K562 (cell line): ENCODE measurements at regions of chr19 and their contacts with region 1.

Region 1: DNA sequence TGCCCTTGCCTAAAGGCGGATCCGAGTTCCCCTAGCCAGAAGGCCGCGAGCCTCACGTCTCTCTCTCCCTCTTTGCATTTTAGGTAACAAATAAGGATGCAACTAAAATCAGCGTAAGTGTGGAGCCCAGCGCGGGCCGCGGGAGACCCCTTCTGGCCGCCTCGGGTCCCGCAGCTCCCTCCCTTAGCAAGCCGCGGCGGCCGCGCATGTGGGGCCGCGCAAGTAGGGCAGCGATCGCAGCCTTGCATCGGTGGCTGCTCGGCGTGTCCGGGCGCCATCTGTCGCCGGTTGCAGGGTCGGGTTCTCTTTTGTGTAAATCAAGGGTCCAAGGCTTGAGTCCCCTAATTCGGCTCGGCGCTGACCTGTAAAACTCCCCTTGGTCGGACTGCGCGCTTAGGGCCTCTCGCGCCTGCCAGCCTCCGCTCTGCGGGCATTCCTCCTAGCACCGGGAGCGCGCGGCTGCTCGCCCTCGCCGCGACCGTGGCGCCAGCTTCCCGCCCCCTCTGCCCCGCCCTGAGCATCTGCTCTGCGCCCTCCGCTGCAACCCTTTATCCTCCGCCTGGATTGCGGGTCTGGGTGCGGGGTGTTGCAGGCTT is 2.7 kb downstream of the VSTM2B start:
- DNase-seq: peak; percentile 60 to 78 (median 77)
- ATAC-seq: peak; percentile 95
- H3K4me3 ChIP-seq: no peak overlapping the region
- H3K27ac ChIP-seq: no peak overlapping the region
- H3K4me1 ChIP-seq: peaks cover 0 to 43% of the 10 kb centered on the region in 2 experiments; a peak in 2 of 5 replicates
- H3K27me3 ChIP-seq: peaks cover 0 to 31% of the 10 kb centered on the region in 2 experiments; a peak in 2 of 5 replicates
- CTCF ChIP-seq: peak; percentile 74 to 88 (median 76)
- EP300 ChIP-seq: no peak
- POLR2A ChIP-seq: no peak
- RAD21 ChIP-seq: peak; percentile 24 to 75

Region 2: DNA sequence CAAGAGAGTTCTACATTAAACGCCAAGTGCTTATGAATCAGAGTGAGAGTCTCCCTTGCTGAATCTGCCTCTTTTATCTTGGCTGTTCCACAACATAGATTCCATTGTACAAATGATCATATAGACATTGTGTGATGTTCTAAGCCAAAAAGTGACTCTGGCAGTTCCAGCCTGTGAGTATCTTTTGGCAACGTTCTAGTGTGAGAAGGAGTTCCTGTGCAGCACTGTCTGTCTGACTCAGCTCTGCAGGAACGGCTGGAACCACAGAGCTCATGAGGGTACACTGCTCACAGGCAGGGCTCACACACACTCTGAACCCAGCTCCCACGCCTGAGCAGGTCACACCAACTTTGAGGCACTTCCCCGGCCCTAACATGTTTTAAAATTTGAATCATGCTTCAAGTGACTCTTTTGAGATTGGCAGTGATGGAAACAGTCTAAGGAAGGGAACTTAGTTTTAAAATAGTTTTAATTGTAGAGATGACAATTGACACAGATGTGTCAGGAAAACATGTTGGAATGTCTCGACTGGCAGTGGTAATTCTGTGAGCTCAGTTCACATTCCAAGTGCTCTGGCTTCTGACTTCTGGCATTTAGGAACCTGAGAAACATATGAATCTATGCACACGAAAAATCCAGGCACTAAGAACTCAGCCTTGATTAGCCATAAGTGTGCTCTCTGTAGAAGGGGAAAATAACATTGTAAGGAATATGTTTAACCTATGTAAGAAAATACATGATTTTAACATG is 587.5 kb before region 1 on chr19:
- CTCF ChIA-PET with region 1: no interaction called
- POLR2A ChIA-PET with region 1: no interaction called
- in situ Hi-C with region 1: no loop called
- intact Hi-C with region 1: loop called (anchors 10 kb)
- DNase-seq: no peak
- ATAC-seq: no peak
- H3K4me3 ChIP-seq: no peak overlapping the region
- H3K27ac ChIP-seq: no peak overlapping the region
- H3K4me1 ChIP-seq: no peaks in the 10 kb centered on the region
- H3K27me3 ChIP-seq: no peaks in the 10 kb centered on the region; a peak in 1 of 5 replicates
- CTCF ChIP-seq: no peak
- EP300 ChIP-seq: no peak
- POLR2A ChIP-seq: no peak
- RAD21 ChIP-seq: no peak

Region 3: DNA sequence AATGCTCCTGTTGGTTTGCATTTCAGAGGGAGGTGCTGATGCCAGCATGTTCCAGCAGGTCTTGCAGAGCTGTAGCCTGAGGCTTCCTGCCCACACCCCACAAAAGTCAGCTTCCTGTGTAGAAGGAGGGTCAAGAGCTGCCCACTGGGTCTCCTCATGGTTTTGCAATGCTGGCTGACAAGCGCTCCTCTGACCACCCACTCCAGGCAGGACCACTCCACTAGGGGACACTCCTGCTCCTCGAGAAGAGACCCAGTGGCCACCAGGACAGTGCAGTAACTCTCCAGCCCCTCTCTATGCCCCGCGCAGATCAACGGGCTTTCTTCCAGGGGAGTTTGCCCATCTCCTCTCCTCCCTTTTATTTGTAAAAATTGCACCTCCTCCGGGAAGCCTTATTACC is 242.6 kb before region 1 on chr19:
- CTCF ChIA-PET with region 1: no interaction called
- POLR2A ChIA-PET with region 1: no interaction called
- in situ Hi-C with region 1: no loop called
- intact Hi-C with region 1: loop called (anchors 2 kb)
- DNase-seq: peak; percentile 16 to 35 (median 22)
- ATAC-seq: peak; percentile 86
- H3K4me3 ChIP-seq: no peak overlapping the region
- H3K27ac ChIP-seq: no peak overlapping the region
- H3K4me1 ChIP-seq: no peaks in the 10 kb centered on the region
- H3K27me3 ChIP-seq: peaks cover 3 to 8% of the 10 kb centered on the region in 2 experiments; a peak in 3 of 5 replicates
- CTCF ChIP-seq: peak; percentile 39 to 44 (median 42); a peak in 5 of 6 replicates
- EP300 ChIP-seq: no peak
- POLR2A ChIP-seq: no peak
- RAD21 ChIP-seq: peak in 1 of 2 experiments; percentile 52; a peak in 2 of 4 replicates

Region 4: GRCh38 chr19:29467824-29468401 is 60.5 kb before region 1 on chr19:
- CTCF ChIA-PET with region 1: no interaction called
- POLR2A ChIA-PET with region 1: no interaction called
- in situ Hi-C with region 1: no loop called
- intact Hi-C with region 1: loop called (anchors 5 kb)
- DNase-seq: peak in 2 of 4 experiments; percentile 44 to 54
- ATAC-seq: peak; percentile 93
- H3K4me3 ChIP-seq: no peak overlapping the region
- H3K27ac ChIP-seq: no peak overlapping the region
- H3K4me1 ChIP-seq: no peaks in the 10 kb centered on the region
- H3K27me3 ChIP-seq: no peaks in the 10 kb centered on the region
- CTCF ChIP-seq: peak; percentile 66 to 72 (median 69)
- EP300 ChIP-seq: no peak
- POLR2A ChIP-seq: no peak
- RAD21 ChIP-seq: peak; percentile 38 to 69

Region 5: DNA sequence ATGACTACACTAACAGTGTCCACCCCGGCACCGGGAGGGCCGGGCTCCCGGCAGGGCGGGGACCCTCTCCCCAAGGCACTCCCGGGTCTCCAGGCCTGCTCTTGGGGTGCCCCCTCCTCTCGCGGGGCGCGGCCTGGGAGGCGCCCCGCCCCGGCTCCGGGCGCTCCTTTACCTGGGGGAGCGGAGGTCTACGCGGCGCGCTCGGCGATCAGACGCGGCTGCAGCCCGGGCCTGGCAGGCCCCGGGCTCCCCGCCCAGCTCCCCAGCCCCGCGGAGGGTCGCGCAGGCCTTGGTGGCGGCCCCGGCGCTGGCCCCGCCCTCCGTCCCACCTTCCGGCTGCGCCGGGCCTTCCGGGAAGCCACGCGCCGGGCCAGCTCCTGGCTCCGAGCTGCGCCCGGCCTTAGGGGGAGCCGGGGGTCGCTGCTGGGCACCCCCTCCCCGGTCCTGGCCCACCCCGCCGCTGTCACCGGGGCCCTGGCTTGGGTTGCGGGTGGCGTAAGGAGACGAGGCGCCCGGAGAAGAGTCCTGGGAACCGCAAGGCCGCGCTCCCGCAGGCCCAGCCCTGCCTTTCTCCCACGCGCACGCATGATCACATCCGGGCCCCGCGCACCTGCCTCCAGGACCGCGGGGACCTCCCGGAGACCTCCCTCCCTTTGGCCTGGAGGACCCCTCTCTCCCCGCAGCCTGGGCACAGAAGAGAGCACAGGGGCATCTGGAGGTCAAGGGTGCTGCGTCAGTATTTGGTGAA is 186.7 kb after region 1 on chr19 and contains the start of gene C19orf12:
- CTCF ChIA-PET with region 1: no interaction called
- POLR2A ChIA-PET with region 1: no interaction called
- in situ Hi-C with region 1: no loop called
- intact Hi-C with region 1: loop called (anchors 10 kb)
- DNase-seq: peak; percentile 68 to 87 (median 79)
- ATAC-seq: peak; percentile 87
- H3K4me3 ChIP-seq: peak within 1 kb of the TSS; percentile 95
- H3K27ac ChIP-seq: peak within 1 kb of the TSS; percentile 83
- H3K4me1 ChIP-seq: peaks cover 7 to 31% of the 10 kb centered on the region in 2 experiments; a peak in 4 of 5 replicates
- H3K27me3 ChIP-seq: peaks cover 0 to 2% of the 10 kb centered on the region in 2 experiments; a peak in 2 of 5 replicates
- CTCF ChIP-seq: no peak
- EP300 ChIP-seq: no peak
- POLR2A ChIP-seq: peak; percentile 86
- RAD21 ChIP-seq: no peak
- polyA plus RNA-seq, gene C19orf12: 1.9 to 2.8 TPM